Right lobe of liver (tissue), 6 donors: ENCODE measurements at regions of chr16 and their contacts with region 1.

Region 1: DNA sequence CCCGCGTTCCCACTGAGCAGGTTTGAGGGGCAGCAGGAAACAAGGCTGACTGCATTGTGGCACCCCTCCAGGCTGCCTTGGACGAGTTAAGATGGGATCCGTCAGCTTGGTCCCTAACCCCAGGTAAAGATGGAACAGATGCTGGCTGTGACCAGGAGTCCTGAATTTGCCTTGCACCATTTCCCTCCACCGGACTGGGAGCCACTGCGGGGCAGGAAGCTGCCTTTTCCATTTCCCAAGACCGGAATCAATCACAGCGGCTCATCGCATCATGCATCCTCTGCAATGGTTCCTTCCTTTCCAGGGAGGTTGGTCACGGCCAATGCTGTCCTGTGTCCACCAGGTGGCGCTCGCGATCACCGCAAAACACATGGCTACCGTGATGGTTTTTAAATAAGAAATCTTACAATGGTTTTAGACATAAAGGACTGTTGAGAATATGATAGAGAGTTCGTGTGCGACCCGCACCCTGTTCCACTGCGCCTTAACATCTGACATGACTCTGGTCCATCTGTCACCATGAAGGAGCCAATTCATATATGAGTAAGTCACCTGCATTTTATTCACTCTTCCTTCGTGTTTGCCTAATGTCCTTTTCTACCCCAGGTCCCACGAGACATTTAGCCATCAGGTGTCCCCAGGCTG is 6.8 kb upstream of the MEAK7 start:
- DNase-seq: peak; percentile 84 to 85 (median 84)
- ATAC-seq: peak; percentile 85 to 89 (median 88)
- H3K4me3 ChIP-seq: no peak overlapping the region
- H3K27ac ChIP-seq: no peak overlapping the region
- H3K4me1 ChIP-seq: no peaks in the 10 kb centered on the region
- H3K27me3 ChIP-seq: no peaks in the 10 kb centered on the region
- CTCF ChIP-seq: peak; percentile 93 to 99 (median 98)
- POLR2A ChIP-seq: no peak

Region 2: GRCh38 chr16:84084570-84085270 is 426.6 kb before region 1 on chr16:
- intact Hi-C with region 1: no loop called
- DNase-seq: peak; percentile 59 to 72 (median 70)
- ATAC-seq: peak; percentile 87 to 92 (median 90)
- H3K4me3 ChIP-seq: no peak overlapping the region
- H3K27ac ChIP-seq: no peak overlapping the region
- H3K4me1 ChIP-seq: peaks cover 0 to 3% (median 0%) of the 10 kb centered on the region in 4 donors
- H3K27me3 ChIP-seq: no peaks in the 10 kb centered on the region
- CTCF ChIP-seq: peak; percentile 63 to 83 (median 80)
- POLR2A ChIP-seq: no peak

Region 3: GRCh38 chr16:84617791-84618580 is 106.7 kb after region 1 on chr16 and contains the start of gene COTL1:
- intact Hi-C with region 1: loop called (anchors 5 kb)
- DNase-seq: peak; percentile 90 to 95 (median 95)
- ATAC-seq: peak; percentile 77 to 88 (median 82)
- H3K4me3 ChIP-seq: peak within 1 kb of the TSS; percentile 55 to 72 (median 66)
- H3K27ac ChIP-seq: peak within 1 kb of the TSS; percentile 6 to 43 (median 40)
- H3K4me1 ChIP-seq: peaks cover 0 to 7% (median 0%) of the 10 kb centered on the region in 4 donors
- H3K27me3 ChIP-seq: peaks cover 0 to 9% of the 10 kb centered on the region in 2 donors
- CTCF ChIP-seq: no peak
- POLR2A ChIP-seq: peak; percentile 84
- total RNA-seq, gene COTL1: 12.4 to 51.0 (median 18.6) TPM

Region 4: GRCh38 chr16:84714028-84714427 is 202.7 kb after region 1 on chr16:
- intact Hi-C with region 1: no loop called
- DNase-seq: peak in 1 of 3 donors; percentile 35
- ATAC-seq: peak in 3 of 4 donors; percentile 7 to 32 (median 22)
- H3K4me3 ChIP-seq: no peak overlapping the region
- H3K27ac ChIP-seq: no peak overlapping the region
- H3K4me1 ChIP-seq: peaks cover 0 to 17% (median 6%) of the 10 kb centered on the region in 4 donors
- H3K27me3 ChIP-seq: no peaks in the 10 kb centered on the region
- CTCF ChIP-seq: no peak
- POLR2A ChIP-seq: no peak

Region 5: GRCh38 chr16:84726079-84726668 is 214.9 kb after region 1 on chr16:
- intact Hi-C with region 1: loop called in 1 of 2 experiments (anchors 10 kb)
- DNase-seq: peak; percentile 86 to 89 (median 88)
- ATAC-seq: peak; percentile 86 to 91 (median 88)
- H3K4me3 ChIP-seq: no peak overlapping the region
- H3K27ac ChIP-seq: no peak overlapping the region
- H3K4me1 ChIP-seq: peaks cover 0 to 56% (median 15%) of the 10 kb centered on the region in 4 donors
- H3K27me3 ChIP-seq: no peaks in the 10 kb centered on the region
- CTCF ChIP-seq: peak; percentile 93 to 99 (median 96)
- POLR2A ChIP-seq: no peak